Activated CD8-positive, alpha-beta T cell treated with anti-CD3 and anti-CD28 coated beads for 36 hours (primary cell): ENCODE measurements at regions of chr11 and their contacts with region 1.

Region 1: GRCh38 chr11:72030472-72031045 is 31.9 kb downstream of the IL18BP start:
- DNase-seq: no peak
- ATAC-seq: no peak
- H3K4me3 Mint-ChIP-seq: no peak overlapping the region
- H3K27ac Mint-ChIP-seq: peak overlapping the region; percentile 79
- H3K4me1 Mint-ChIP-seq: peaks cover 55% of the 10 kb centered on the region
- H3K27me3 Mint-ChIP-seq: no peaks in the 10 kb centered on the region
- CTCF ChIP-seq: no peak

Region 2: DNA sequence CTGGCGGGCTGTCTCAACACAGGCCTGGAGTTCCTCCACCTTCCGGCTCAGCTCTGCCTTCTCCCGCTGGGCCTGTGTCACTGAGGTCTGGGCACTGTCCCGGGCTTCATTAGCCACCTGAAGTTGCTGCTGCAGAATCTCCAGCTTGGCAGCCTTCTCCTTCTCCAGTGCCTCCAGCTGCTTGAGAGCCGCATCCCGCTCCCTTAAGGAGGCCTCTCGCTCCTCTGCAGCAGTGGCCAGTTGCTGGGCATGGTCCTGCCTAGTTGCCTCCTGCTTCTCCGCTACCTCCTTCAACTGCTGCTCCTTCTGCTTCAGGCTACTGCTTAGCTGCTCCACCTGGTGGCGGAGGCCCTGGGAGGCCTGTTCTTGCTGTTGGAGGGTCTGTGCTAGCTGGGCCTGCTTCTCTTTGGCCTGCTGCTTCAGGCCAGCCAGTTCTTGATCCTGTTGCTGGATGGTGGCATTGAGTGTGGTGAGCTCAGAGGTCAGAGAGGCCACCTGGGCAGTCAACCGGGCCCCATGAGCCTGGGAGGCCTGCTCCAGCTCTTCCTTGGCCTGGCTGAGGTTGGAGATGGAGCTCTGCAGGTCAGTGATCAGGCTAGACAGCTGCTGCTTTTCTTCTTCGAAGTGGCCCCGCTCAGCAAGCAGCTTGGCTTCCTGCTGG is 14.9 kb before region 1 on chr11:
- CTCF ChIA-PET with region 1: interaction called, 36 read pairs
- POLR2A ChIA-PET with region 1: interaction called, 6 read pairs
- intact Hi-C with region 1: no loop called
- DNase-seq: peak; percentile 17
- ATAC-seq: peak; percentile 25
- H3K4me3 Mint-ChIP-seq: no peak overlapping the region
- H3K27ac Mint-ChIP-seq: no peak overlapping the region
- H3K4me1 Mint-ChIP-seq: no peaks in the 10 kb centered on the region
- H3K27me3 Mint-ChIP-seq: no peaks in the 10 kb centered on the region
- CTCF ChIP-seq: no peak

Region 3: GRCh38 chr11:72040726-72041441 is 10.3 kb after region 1 on chr11:
- CTCF ChIA-PET with region 1: interaction called, 54 read pairs
- POLR2A ChIA-PET with region 1: interaction called, 33 read pairs
- intact Hi-C with region 1: no loop called
- DNase-seq: peak; percentile 79
- ATAC-seq: peak; percentile 72
- H3K4me3 Mint-ChIP-seq: no peak overlapping the region
- H3K27ac Mint-ChIP-seq: no peak overlapping the region
- H3K4me1 Mint-ChIP-seq: peaks cover 32% of the 10 kb centered on the region
- H3K27me3 Mint-ChIP-seq: no peaks in the 10 kb centered on the region
- CTCF ChIP-seq: no peak

Region 4: DNA sequence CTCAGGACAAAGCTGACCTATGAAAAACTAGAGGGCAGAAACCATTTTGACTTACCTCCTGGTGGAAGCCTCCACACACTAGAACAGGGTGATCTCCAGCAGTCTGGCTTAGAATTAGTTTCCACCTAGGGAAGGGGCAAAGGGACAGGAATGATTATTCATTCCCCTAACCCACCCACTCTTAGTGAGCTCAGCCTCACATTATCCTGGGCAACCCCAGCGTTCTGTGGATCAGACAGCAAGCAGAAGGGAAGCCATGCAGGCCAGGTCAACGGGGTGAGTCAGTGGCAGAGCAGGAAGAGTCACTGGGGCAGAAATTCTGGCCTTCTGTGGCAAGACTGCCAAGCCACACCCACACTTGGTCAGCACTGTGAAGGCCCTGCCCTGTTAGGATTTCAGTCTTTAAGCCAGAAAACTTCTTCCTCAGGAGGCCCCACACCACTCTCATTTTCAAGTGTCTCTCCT is 39.3 kb after region 1 on chr11:
- CTCF ChIA-PET with region 1: interaction called, 20 read pairs
- POLR2A ChIA-PET with region 1: no interaction called
- intact Hi-C with region 1: no loop called
- DNase-seq: no peak
- ATAC-seq: no peak
- H3K4me3 Mint-ChIP-seq: no peak overlapping the region
- H3K27ac Mint-ChIP-seq: peak overlapping the region; percentile 33
- H3K4me1 Mint-ChIP-seq: peaks cover 36% of the 10 kb centered on the region
- H3K27me3 Mint-ChIP-seq: no peaks in the 10 kb centered on the region
- CTCF ChIP-seq: no peak

Region 5: DNA sequence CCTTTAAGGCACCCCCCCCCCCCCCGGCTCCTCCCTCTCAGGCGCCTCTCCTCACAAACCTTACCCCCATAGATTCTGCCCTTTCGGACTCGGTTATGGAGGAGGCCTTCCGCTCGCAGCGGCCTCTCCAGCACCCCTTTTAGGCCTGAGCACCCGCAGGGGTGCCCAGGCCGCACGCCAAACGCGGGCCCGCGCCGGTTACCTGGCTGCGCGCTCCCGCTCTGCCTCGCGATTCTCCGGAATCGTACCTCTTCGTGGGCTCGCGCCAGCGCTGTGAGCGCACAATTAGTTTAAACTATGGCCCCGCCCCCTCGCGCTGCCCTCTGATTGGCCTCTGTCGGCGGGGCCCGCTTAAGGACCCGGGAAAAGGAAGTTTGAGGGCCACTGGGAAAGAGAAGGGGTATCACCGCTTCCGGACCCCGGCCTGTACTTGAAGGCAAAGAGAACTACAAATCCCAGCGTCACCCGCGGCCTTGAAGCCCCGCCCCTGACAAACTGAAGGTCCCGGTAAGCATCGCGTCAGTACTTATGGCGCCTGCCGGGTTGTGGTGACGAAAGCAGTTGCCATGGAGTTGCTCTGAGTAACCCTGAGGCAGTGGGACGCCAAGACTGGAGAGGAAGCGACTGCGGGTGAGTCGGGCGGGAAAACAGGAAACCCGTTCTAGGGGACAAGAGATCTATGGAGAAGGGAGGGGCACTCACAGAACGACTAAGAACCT is 49.9 kb after region 1 on chr11 and contains the starts of genes LRRC51 and NUMA1:
- CTCF ChIA-PET with region 1: interaction called, 37 read pairs
- POLR2A ChIA-PET with region 1: interaction called, 3 read pairs
- intact Hi-C with region 1: no loop called
- DNase-seq: peak; percentile 100
- ATAC-seq: peak; percentile 93
- H3K4me3 Mint-ChIP-seq: peak within 1 kb of the TSS; percentile 99
- H3K27ac Mint-ChIP-seq: peak within 1 kb of the TSS; percentile 99
- H3K4me1 Mint-ChIP-seq: peaks cover 34% of the 10 kb centered on the region
- H3K27me3 Mint-ChIP-seq: no peaks in the 10 kb centered on the region
- CTCF ChIP-seq: no peak
- total RNA-seq, gene LRRC51: 7.0 to 7.7 TPM
- total RNA-seq, gene NUMA1: 165 to 169 TPM

Region 6: DNA sequence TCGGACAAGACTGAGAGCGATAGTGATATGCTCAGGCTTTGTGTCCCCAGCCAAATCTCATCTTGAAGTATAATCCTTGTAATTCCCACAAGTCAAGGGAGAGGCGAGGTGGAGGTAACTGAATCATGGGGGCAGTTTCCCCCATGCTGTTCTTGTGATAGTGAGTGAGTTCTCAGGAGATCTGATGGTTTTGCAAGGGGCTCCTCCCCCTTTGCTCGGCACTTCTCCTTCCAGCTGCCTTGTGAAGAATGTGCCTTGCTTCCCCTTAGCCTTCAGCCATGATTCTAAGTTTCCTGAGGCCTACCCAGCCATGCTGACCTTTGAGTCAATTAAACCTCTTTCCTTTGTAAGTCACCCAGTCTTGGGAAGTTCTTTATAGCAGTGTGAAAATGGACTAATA is 178.5 kb after region 1 on chr11:
- CTCF ChIA-PET with region 1: no interaction called
- POLR2A ChIA-PET with region 1: no interaction called
- intact Hi-C with region 1: no loop called
- DNase-seq: no peak
- ATAC-seq: no peak
- H3K4me3 Mint-ChIP-seq: no peak overlapping the region
- H3K27ac Mint-ChIP-seq: no peak overlapping the region
- H3K4me1 Mint-ChIP-seq: no peaks in the 10 kb centered on the region
- H3K27me3 Mint-ChIP-seq: peaks cover 3% of the 10 kb centered on the region
- CTCF ChIP-seq: no peak

Region 7: GRCh38 chr11:72244361-72245262 is 214.1 kb after region 1 on chr11:
- CTCF ChIA-PET with region 1: no interaction called
- POLR2A ChIA-PET with region 1: no interaction called
- intact Hi-C with region 1: no loop called
- DNase-seq: no peak
- ATAC-seq: no peak
- H3K4me3 Mint-ChIP-seq: no peak overlapping the region
- H3K27ac Mint-ChIP-seq: no peak overlapping the region
- H3K4me1 Mint-ChIP-seq: peaks cover 15% of the 10 kb centered on the region
- H3K27me3 Mint-ChIP-seq: peaks cover 44% of the 10 kb centered on the region
- CTCF ChIP-seq: no peak